MCF 10A (cell line): ENCODE measurements at regions of chr20 and their contacts with region 1.

Region 1: DNA sequence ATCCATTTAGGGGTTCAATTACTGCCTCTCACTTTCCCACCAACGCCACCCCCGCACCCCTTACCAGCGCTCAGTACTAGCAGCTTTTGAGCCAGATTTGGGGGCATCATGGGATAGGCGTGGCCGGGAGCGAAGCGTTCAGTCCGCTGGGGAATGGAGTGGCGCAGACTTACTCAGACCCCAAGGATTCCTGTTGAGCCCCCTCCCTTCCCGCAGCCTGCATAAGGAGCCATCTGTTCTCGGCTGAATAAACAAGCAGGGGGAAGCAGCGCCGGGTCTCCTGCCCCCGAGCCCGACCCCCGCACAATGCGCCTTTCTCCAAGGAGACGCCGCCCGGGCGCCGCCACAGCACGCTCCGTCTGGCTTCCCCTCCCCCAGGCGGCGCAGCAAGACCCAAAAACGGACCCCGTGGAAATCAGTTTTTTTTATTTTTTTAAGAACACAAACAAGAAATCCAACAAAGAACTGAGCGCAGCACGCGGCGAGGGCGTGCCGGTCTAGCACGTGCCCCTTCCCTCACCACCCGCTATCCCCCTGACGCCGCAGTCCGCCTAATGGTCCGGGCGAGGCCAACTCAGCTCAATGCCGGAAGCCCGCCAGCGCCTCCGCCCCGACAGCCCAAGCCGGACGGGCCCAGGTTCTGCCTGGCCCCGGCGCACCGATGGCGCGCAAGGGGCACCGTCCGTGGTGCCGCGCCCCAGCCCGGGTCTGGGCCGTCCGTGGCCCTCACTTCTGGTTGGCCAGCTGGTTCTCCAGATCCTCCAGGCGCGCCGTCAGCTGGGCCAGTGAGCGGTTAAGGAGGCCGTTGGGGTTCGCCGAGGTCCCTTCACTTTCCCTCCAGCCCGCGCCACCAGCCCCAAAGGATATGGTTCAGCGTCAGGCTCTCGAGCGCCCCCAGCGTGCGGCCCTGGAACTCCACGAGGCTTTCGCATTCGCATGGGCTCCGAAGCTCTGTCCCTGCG is 13.3 kb upstream of the RBPJL start:
- DNase-seq: peak; percentile 79
- H3K4me3 Mint-ChIP-seq: peak overlapping the region; percentile 64
- H3K27ac Mint-ChIP-seq: no peak overlapping the region
- H3K4me1 Mint-ChIP-seq: peaks cover 12% of the 10 kb centered on the region
- H3K27me3 Mint-ChIP-seq: no peaks in the 10 kb centered on the region
- CTCF ChIP-seq: peak; percentile 97

Region 2: GRCh38 chr20:43994486-43995100 is 1298.7 kb before region 1 on chr20:
- CTCF ChIA-PET with region 1: no interaction called
- POLR2A ChIA-PET with region 1: no interaction called
- intact Hi-C with region 1: no loop called
- DNase-seq: no peak
- H3K4me3 Mint-ChIP-seq: no peak overlapping the region
- H3K27ac Mint-ChIP-seq: no peak overlapping the region
- H3K4me1 Mint-ChIP-seq: no peaks in the 10 kb centered on the region
- H3K27me3 Mint-ChIP-seq: no peaks in the 10 kb centered on the region
- CTCF ChIP-seq: no peak

Region 3: GRCh38 chr20:44885392-44886265 is 407.7 kb before region 1 on chr20 and contains the start of gene YWHAB:
- CTCF ChIA-PET with region 1: interaction called, 3 read pairs
- POLR2A ChIA-PET with region 1: no interaction called
- intact Hi-C with region 1: loop called (anchors 5 kb)
- DNase-seq: peak; percentile 98
- H3K4me3 Mint-ChIP-seq: peak within 1 kb of the TSS; percentile 95
- H3K27ac Mint-ChIP-seq: peak within 1 kb of the TSS; percentile 93
- H3K4me1 Mint-ChIP-seq: peaks cover 17% of the 10 kb centered on the region
- H3K27me3 Mint-ChIP-seq: no peaks in the 10 kb centered on the region
- CTCF ChIP-seq: no peak
- total RNA-seq, gene YWHAB: 235 and 250 TPM in 2 replicates

Region 4: DNA sequence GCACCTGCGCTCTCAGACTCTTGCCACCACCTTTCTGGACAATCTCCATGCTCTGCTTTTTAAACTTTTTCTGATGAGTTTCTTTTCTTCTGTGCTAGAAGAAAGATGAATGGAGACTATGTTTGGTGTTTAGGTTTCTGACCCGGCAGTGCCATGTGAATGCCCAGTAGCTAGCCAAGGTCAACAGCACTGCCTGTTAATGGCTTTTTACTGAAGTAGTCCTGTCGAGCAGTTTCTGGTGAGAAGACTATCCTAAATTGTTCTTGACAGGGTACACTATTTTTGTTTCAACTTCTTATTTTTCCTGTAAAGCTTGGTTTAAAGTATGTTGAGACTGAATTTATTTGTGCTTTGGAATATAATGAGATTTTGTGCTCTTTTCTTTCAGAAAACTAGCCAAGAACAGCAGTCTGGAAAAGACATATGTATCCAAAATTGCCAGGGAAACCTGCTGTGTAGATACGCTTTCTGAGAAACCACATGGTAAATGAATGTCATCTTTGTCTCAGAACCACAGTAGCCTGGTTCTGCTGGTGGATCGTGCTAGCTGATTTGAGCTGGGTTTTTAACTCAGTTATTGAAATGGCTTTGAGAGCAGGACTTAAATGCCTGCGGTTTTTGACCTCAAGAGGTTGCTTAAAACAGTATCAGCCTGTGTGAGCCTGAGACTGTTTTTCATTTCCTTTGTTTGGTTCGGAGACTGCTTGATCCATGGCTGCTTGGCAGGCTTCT is 240.5 kb before region 1 on chr20:
- CTCF ChIA-PET with region 1: interaction called, 51 read pairs
- POLR2A ChIA-PET with region 1: no interaction called
- intact Hi-C with region 1: no loop called
- DNase-seq: no peak
- H3K4me3 Mint-ChIP-seq: no peak overlapping the region
- H3K27ac Mint-ChIP-seq: no peak overlapping the region
- H3K4me1 Mint-ChIP-seq: no peaks in the 10 kb centered on the region
- H3K27me3 Mint-ChIP-seq: no peaks in the 10 kb centered on the region
- CTCF ChIP-seq: no peak

Region 5: GRCh38 chr20:45111799-45112471 is 181.4 kb before region 1 on chr20:
- CTCF ChIA-PET with region 1: interaction called, 133 read pairs
- POLR2A ChIA-PET with region 1: no interaction called
- intact Hi-C with region 1: no loop called
- DNase-seq: peak; percentile 50
- H3K4me3 Mint-ChIP-seq: no peak overlapping the region
- H3K27ac Mint-ChIP-seq: no peak overlapping the region
- H3K4me1 Mint-ChIP-seq: no peaks in the 10 kb centered on the region
- H3K27me3 Mint-ChIP-seq: peaks cover 10% of the 10 kb centered on the region
- CTCF ChIP-seq: peak; percentile 64

Region 6: GRCh38 chr20:45163083-45163803 is 130.1 kb before region 1 on chr20:
- CTCF ChIA-PET with region 1: interaction called, 22 read pairs
- POLR2A ChIA-PET with region 1: interaction called, 4 read pairs
- intact Hi-C with region 1: no loop called
- DNase-seq: no peak
- H3K4me3 Mint-ChIP-seq: no peak overlapping the region
- H3K27ac Mint-ChIP-seq: no peak overlapping the region
- H3K4me1 Mint-ChIP-seq: peaks cover 4% of the 10 kb centered on the region
- H3K27me3 Mint-ChIP-seq: peaks cover 45% of the 10 kb centered on the region
- CTCF ChIP-seq: no peak

Region 7: GRCh38 chr20:45254869-45255266 is 38.5 kb before region 1 on chr20:
- CTCF ChIA-PET with region 1: interaction called, 154 read pairs
- POLR2A ChIA-PET with region 1: interaction called, 23 read pairs
- intact Hi-C with region 1: no loop called
- DNase-seq: peak; percentile 99
- H3K4me3 Mint-ChIP-seq: peak overlapping the region; percentile 79
- H3K27ac Mint-ChIP-seq: peak overlapping the region; percentile 95
- H3K4me1 Mint-ChIP-seq: peaks cover 58% of the 10 kb centered on the region
- H3K27me3 Mint-ChIP-seq: no peaks in the 10 kb centered on the region
- CTCF ChIP-seq: no peak

Region 8: GRCh38 chr20:45771182-45771759 is 477.9 kb after region 1 on chr20:
- CTCF ChIA-PET with region 1: interaction called, 21 read pairs
- POLR2A ChIA-PET with region 1: no interaction called
- intact Hi-C with region 1: no loop called
- DNase-seq: peak; percentile 83
- H3K4me3 Mint-ChIP-seq: no peak overlapping the region
- H3K27ac Mint-ChIP-seq: no peak overlapping the region
- H3K4me1 Mint-ChIP-seq: no peaks in the 10 kb centered on the region
- H3K27me3 Mint-ChIP-seq: peaks cover 11% of the 10 kb centered on the region
- CTCF ChIP-seq: peak; percentile 83